ENCODE measurements at regions of chr2 and their contacts with region 1.

Region 1: GRCh38 chr2:159286709-159287441 is 372 bp upstream of the WDSUB1 start:
- DNase-seq: peak; percentile 91 to 100 (median 98)

Region 2: GRCh38 chr2:159131914-159132281 is 155.0 kb before region 1 on chr2:
- intact Hi-C with region 1: loop called (anchors 10 kb)
- DNase-seq: no peak

Region 3: DNA sequence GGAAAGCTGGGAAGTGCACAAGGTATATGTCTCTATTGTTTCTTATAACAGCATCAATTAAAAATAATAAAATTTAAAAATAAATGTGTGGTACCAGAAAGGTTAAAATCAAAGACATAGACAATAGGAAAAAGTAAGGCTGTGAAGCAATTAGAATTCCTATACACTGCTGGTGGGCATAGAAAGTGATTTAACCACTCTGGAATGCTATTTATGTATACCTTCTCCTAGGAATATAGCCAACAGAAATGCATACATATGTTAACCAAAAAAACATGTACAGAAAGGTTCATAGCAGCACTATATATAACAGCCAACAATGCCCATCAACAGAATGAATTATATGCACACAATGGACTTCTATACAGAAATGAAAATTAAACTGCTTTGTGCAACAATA is 43.3 kb before region 1 on chr2:
- intact Hi-C with region 1: no loop called
- DNase-seq: no peak

Region 4: GRCh38 chr2:159516241-159516766 is 229.4 kb after region 1 on chr2:
- intact Hi-C with region 1: no loop called
- DNase-seq: no peak

Region 5: GRCh38 chr2:159615140-159615951 is 328.5 kb after region 1 on chr2:
- intact Hi-C with region 1: loop called (anchors 10 kb)
- DNase-seq: peak; percentile 67 to 96 (median 78)

Measured in posterior cingulate gyrus (tissue), 11 donors.